Uterus (tissue), 4 donors: ENCODE measurements at regions of chr1 and their contacts with region 1.

Region 1: DNA sequence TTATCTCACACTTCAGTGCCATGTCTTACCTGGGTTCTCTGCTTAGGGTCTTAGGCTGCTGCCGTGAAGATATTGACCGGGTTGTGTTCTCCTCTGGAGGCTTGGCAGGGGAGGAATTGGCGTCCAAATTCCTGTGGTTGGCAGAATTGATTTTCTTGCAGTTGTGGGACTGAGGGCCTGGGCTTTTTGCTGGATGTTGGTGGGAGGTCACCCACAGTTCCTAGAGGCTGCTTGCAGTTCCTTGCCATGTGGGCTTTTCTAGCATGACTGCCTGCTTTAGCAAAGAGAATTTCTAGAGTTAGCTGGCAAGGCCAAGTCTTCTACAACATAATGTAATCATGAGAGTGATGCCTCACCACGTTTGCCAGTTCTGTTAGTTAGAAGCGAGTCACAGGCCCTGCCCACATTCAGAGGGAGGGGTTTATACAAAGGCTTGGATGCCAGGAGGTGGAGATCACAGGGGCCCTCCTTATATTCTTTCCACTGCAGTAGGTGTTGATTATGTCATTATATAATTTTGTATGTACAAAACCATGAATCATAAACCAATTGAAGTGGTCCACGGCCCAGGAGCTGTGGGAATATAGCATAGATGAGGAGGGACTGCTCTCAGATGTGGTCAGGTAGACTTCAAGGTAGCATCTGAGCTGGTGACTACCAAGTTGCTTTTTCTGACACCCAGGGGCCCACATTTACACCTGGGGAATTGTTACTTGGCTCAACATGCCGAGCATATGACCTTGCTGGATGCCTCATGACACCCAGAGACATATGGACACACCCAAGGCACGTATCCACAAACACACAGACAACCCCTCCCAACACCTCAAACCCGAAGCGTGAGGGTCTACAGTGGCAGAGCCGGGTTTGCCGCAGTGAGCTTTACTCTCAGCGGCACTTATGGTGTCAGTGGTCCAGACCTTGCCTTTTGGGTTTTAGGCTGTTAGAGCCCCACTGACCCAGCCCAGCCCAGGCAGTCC is 6.7 kb downstream of the UBL4B start:
- DNase-seq: no peak
- H3K4me3 ChIP-seq: no peak overlapping the region
- H3K27ac ChIP-seq: no peak overlapping the region
- H3K4me1 ChIP-seq: no peaks in the 10 kb centered on the region
- H3K27me3 ChIP-seq: no peaks in the 10 kb centered on the region
- CTCF ChIP-seq: no peak
- POLR2A ChIP-seq: no peak

Region 2: DNA sequence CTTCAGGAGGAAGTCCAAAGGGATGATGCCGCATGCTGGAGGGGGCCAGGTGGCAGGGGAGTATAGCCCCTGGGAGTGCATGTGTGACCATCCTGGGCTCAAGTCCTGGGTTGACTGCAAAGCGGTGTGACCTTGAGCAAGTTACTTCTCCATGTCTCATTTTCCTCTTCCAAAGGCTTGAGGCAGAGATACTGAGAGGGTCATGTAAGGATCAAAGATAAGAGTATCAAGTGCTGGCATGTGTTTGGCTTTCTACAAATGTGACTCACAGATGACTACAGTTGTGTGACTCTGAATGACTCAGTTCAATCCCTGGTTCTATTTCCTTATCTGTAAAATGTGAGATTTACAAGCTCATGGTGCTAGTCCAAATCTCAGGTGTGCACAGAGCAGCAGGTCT is 358.1 kb after region 1 on chr1:
- intact Hi-C with region 1: loop called (anchors 5 kb)
- DNase-seq: no peak
- H3K4me3 ChIP-seq: no peak overlapping the region
- H3K27ac ChIP-seq: no peak overlapping the region
- H3K4me1 ChIP-seq: no peaks in the 10 kb centered on the region
- H3K27me3 ChIP-seq: no peaks in the 10 kb centered on the region
- CTCF ChIP-seq: no peak
- POLR2A ChIP-seq: no peak